ENCODE measurements at regions of chr1 and their contacts with region 1.

Region 1: DNA sequence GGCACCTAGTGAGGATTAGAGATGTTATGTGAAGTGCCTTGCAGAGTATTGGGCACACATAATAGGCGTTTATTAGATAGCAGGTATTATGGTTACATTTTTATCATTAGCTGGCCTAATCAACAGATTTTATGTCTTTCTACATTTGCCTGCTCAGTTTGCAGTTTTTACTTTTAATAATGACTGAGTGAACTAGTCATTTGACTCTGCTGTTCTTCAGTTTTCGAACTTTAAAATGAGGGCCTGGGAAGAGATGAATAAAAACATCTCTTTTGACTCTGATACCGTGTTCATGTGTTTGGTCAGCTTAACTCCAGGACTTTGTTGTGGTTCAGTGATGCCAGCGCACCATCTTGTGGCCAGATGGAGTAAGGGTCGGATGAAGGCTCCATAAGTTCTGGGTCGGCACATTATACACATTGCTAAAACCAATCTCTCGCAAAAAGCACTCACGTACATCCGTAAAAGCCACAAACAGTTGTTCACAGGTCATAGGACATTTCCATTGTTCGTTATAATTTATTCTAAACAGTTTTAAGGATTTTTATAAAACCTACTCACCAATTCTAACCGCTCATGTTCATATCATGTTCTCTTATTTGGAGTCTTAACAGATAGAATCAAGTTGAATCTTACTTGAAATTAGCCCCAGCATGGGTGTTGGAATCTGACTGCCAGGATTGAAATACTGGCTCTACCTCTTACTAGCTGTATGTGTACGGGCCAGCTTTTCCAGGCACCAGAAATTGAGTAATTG is 78.4 kb upstream of the GPR88 start:
- DNase-seq: peak; percentile 78
- H3K4me3 ChIP-seq: no peak overlapping the region
- H3K27ac ChIP-seq: peak overlapping the region in 2 of 4 donors; percentile 15 to 45
- H3K4me1 ChIP-seq: peaks cover 0 to 21% (median 2%) of the 10 kb centered on the region in 4 donors
- H3K27me3 ChIP-seq: no peaks in the 10 kb centered on the region
- CTCF ChIP-seq: peak; percentile 76 to 87 (median 86)
- EP300 ChIP-seq: no peak
- POLR2A ChIP-seq: no peak

Region 2: DNA sequence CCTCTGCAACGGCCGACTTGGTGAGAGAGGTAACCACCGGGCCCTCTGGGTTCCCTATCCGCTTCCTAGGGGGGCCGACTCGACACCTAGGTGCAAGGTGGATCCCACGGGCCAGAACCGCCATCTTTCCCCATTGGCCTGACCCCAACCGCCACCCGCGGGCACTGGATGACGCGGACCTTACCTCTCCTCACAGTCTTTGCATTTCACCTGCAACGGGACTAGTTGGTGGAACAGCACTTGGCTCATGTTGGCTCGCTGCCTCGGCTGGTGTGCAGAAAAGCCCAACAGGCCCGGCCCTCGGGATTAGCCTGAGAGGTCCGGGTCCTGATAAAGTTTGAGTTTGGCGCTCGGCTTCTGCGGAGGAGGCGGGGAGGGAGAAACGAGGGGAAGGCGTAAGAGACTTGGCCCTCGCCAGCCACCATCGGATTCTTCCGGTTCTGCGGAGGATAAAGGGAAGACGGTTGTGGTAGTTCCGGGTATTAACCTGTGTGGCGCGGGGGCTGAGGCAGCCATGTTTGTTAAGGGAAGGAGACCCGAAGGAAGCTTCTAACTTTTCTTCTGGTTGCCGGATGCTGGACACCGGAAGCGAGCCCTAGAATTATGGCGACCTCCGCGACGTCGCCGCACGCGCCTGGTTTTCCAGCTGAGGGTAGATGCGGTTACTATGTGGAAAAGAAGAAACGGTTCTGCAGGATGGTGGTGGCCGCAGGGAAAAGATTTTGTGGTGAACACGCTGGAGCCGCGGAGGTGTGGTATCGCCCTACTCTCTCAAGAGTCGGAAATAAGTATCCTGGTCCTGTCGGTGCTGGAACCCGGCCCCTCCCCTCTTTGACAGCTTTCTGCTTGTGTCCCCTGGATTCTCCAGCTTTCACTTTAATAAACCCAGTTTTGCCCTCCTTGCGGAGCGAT is 326.7 kb before region 1 on chr1 and contains the starts of genes SASS6 and TRMT13:
- in situ Hi-C with region 1: loop called in 1 of 4 experiments (anchors 25 kb)
- intact Hi-C with region 1: no loop called
- DNase-seq: peak; percentile 98
- H3K4me3 ChIP-seq: peak within 1 kb of the TSS; percentile 61 to 99 (median 78)
- H3K27ac ChIP-seq: peak within 1 kb of the TSS; percentile 67 to 89 (median 83)
- H3K4me1 ChIP-seq: peaks cover 15 to 20% (median 16%) of the 10 kb centered on the region in 4 donors
- H3K27me3 ChIP-seq: no peaks in the 10 kb centered on the region
- CTCF ChIP-seq: peak in 3 of 5 experiments; percentile 5 to 41 (median 33)
- EP300 ChIP-seq: peak; percentile 44
- POLR2A ChIP-seq: peak; percentile 17
- total RNA-seq, gene SASS6: 1.2 to 2.4 (median 2.0) TPM
- total RNA-seq, gene TRMT13: 3.7 to 25.4 (median 16.7) TPM

Region 3: DNA sequence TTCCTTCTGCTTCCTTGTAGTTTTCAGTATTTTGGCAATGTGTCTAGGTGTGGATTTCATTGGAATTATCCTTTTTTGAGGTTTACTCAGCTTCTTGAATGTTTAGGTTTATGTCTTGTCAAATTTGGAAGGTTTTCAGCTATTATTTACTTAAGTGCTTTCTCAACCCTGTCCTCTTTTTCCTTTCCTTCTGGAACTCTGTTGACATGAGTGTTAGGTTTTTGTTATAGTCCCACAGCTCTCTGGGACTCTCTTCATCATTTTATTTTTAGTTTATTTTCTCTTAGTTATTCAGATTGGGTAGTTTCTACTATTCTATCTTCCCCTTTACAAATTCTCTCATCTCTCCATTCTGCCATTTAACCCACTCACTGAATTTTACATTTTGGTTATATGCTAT is 15.3 kb after region 1 on chr1:
- in situ Hi-C with region 1: no loop called
- intact Hi-C with region 1: loop called (anchors 1 kb)
- DNase-seq: no peak
- H3K4me3 ChIP-seq: no peak overlapping the region
- H3K27ac ChIP-seq: no peak overlapping the region
- H3K4me1 ChIP-seq: no peaks in the 10 kb centered on the region
- H3K27me3 ChIP-seq: no peaks in the 10 kb centered on the region
- CTCF ChIP-seq: no peak
- EP300 ChIP-seq: no peak
- POLR2A ChIP-seq: no peak

Region 4: DNA sequence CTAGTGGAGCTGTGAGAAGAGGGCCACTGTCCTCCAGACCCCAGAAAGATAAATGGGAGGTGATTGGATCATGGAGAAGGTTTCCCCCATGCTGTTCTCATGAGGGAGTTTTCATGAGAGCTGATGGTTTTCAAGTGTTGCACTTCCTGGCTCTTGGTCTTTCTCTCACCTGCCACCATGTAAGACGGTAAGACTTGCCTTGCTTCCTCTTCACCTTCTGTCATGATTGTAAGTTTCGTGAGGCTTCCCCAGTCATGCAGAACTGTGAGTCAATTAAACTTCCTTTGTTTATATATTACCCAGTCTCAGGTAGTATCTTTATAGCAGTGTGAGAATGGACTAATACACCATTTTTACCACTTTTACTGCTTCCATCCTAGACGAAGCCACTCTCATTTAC is 106.0 kb after region 1 on chr1:
- in situ Hi-C with region 1: no loop called
- intact Hi-C with region 1: no loop called
- DNase-seq: no peak
- H3K4me3 ChIP-seq: no peak overlapping the region
- H3K27ac ChIP-seq: no peak overlapping the region
- H3K4me1 ChIP-seq: no peaks in the 10 kb centered on the region
- H3K27me3 ChIP-seq: no peaks in the 10 kb centered on the region
- CTCF ChIP-seq: no peak
- EP300 ChIP-seq: no peak
- POLR2A ChIP-seq: no peak

Region 5: GRCh38 chr1:100875228-100875627 is 415.7 kb after region 1 on chr1:
- in situ Hi-C with region 1: loop called in 3 of 4 experiments (anchors 10 to 25 kb)
- intact Hi-C with region 1: no loop called
- DNase-seq: no peak
- H3K4me3 ChIP-seq: no peak overlapping the region
- H3K27ac ChIP-seq: no peak overlapping the region
- H3K4me1 ChIP-seq: no peaks in the 10 kb centered on the region
- H3K27me3 ChIP-seq: no peaks in the 10 kb centered on the region
- CTCF ChIP-seq: no peak
- EP300 ChIP-seq: no peak
- POLR2A ChIP-seq: no peak